Activated naive CD4-positive, alpha-beta T cell treated with anti-CD3 and anti-CD28 coated beads for 36 hours (primary cell): ENCODE measurements at regions of chr1 and their contacts with region 1.

Region 1: DNA sequence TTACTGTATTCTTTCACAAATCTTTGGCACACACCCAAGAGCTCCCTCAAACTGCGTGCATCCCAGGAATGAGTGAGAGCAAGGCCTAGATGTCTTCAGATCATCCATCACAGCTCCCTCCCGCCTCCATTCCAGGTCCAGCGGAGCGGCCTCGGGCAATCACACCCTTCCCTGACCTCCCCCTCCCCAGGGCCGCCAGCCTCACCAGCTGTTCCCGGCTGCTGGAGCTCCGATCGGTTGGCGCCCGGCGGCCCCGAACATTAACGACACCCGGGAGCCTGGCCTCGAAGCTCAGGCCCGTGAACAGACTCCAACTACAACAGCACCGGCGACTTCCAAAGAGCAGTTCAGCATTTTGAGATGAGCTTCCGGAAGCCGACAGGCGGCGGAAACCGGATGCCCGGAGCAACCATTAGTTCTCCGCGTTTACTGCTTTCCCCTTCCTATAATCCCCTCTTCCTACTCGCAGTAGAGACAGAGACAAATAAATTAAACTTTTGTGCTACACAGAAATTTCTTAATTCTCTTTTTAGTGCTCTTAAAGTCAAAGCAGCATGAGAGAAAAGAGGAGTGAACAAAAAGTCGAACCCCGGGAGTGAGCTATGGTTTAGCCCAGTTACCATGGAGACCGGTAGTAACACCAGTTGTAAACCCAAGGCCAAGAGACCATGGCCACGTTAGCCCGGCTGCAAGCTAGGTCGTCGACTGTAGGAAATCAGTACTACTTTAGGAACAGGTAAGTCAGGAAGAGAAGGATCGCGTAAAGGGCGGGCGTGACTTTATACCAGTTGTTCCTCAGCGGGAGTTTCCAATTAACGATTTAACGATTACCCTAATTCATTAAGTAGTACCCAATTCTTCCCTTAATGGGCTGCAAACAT is at the starts of genes GPATCH2 and SPATA17:
- DNase-seq: peak; percentile 80
- H3K4me3 Mint-ChIP-seq: peak within 1 kb of the TSS; percentile 93
- H3K27ac Mint-ChIP-seq: peak within 1 kb of the TSS; percentile 99
- H3K4me1 Mint-ChIP-seq: peaks cover 31% of the 10 kb centered on the region
- H3K27me3 Mint-ChIP-seq: peaks cover 6% of the 10 kb centered on the region
- total RNA-seq, gene GPATCH2: 4.8 to 6.2 TPM
- total RNA-seq, gene SPATA17: not detected

Region 2: DNA sequence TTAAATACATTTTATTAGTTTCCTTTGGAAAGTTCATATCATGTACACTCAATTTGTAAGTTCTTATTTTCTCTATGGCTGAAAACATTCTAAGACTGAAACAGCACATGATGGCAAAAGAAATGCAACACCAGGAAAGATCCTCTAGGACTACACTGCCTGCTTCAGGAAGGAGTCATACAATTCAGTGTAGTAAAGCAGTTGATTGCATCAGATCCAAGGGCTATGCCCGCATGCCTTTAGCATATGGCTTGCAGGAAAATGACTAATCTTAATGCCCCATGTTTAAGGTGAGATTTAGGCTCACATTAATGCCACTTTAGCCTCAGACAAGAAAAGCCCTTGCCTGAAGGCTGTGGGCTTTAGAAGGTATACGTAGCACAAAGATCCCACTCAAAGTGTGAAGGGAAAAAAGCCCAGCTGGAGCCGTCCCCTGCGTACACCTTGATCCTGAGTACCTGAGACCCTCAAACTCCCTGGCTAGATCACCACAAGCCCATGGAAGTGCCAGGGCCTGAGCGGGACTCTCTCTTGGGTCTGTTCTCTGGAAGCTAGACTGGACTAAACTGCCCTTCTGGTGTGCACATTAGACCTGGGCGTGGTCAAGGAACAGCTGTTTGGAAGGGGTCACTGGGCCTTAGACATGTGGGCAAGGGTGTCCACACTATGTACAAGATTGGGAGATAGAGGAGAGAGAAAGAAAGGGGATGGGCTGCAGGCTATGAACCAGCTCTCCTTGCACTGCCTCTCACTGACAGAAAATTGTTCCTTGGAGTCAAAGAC is 960.6 kb before region 1 on chr1:
- CTCF ChIA-PET with region 1: no interaction called
- intact Hi-C with region 1: no loop called
- DNase-seq: no peak
- H3K4me3 Mint-ChIP-seq: no peak overlapping the region
- H3K27ac Mint-ChIP-seq: no peak overlapping the region
- H3K4me1 Mint-ChIP-seq: no peaks in the 10 kb centered on the region
- H3K27me3 Mint-ChIP-seq: no peaks in the 10 kb centered on the region

Region 3: GRCh38 chr1:217599154-217599553 is 31.8 kb before region 1 on chr1:
- CTCF ChIA-PET with region 1: no interaction called
- intact Hi-C with region 1: no loop called
- DNase-seq: no peak
- H3K4me3 Mint-ChIP-seq: no peak overlapping the region
- H3K27ac Mint-ChIP-seq: no peak overlapping the region
- H3K4me1 Mint-ChIP-seq: no peaks in the 10 kb centered on the region
- H3K27me3 Mint-ChIP-seq: no peaks in the 10 kb centered on the region

Region 4: DNA sequence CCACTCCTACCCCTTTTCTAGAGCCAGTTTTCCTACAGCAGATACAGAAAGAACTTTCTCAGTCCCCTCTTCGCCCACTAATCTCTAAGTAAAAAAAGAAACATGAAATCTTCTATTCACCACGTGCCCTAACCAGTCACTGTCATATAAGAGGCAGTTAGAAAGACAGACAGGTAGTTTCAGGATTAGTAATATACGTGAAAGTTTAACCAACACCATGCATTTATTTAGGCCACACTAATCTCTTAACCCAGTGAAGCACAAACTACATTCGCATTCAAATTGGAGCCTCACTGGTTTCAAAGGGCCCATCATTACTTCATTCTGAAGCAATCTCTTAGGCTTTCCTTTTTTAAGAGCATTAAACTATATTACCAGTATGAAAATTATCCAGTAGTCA is 10.1 kb before region 1 on chr1:
- CTCF ChIA-PET with region 1: interaction called, 5 read pairs
- intact Hi-C with region 1: loop called (anchors 1 kb)
- DNase-seq: no peak
- H3K4me3 Mint-ChIP-seq: no peak overlapping the region
- H3K27ac Mint-ChIP-seq: no peak overlapping the region
- H3K4me1 Mint-ChIP-seq: peaks cover 33% of the 10 kb centered on the region
- H3K27me3 Mint-ChIP-seq: no peaks in the 10 kb centered on the region

Region 5: GRCh38 chr1:217673387-217673786 is 42.4 kb after region 1 on chr1:
- CTCF ChIA-PET with region 1: no interaction called
- intact Hi-C with region 1: no loop called
- DNase-seq: no peak
- H3K4me3 Mint-ChIP-seq: no peak overlapping the region
- H3K27ac Mint-ChIP-seq: no peak overlapping the region
- H3K4me1 Mint-ChIP-seq: no peaks in the 10 kb centered on the region
- H3K27me3 Mint-ChIP-seq: peaks cover 9% of the 10 kb centered on the region